H1 (cell line): ENCODE measurements at regions of chr11 and their contacts with region 1.

Region 1: GRCh38 chr11:77066229-77067042 is at the start of gene CAPN5:
- DNase-seq: peak; percentile 84 to 96
- H3K4me3 ChIP-seq: peak within 1 kb of the TSS; percentile 58 to 89 (median 66)
- H3K27ac ChIP-seq: peak within 1 kb of the TSS; percentile 50; the same call in 1 of the 2 replicates
- H3K4me1 ChIP-seq: peaks cover 0 to 7% (median under 1%) of the 10 kb centered on the region in 4 experiments; a peak in 5 of 7 replicates
- H3K27me3 ChIP-seq: peaks cover 0 to 3% (median 0%) of the 10 kb centered on the region in 4 experiments; a peak in 3 of 7 replicates
- CTCF ChIP-seq: peak; percentile 49 to 57 (median 51)
- EP300 ChIP-seq: peak in 1 of 2 experiments; percentile 27; a peak in 1 of 3 replicates
- POLR2A ChIP-seq: peak in 1 of 2 experiments; percentile 88; a peak in 2 of 3 replicates
- RAD21 ChIP-seq: peak; percentile 31 to 40; a peak in 2 of 4 replicates
- total RNA-seq, gene CAPN5: 22.4 and 22.6 TPM in 2 replicates

Region 2: GRCh38 chr11:77053217-77054015 is 13.0 kb before region 1 on chr11:
- CTCF ChIA-PET with region 1: interaction called, 43 read pairs
- POLR2A ChIA-PET with region 1: interaction called, 4 read pairs
- DNase-seq: no peak
- H3K4me3 ChIP-seq: no peak overlapping the region
- H3K27ac ChIP-seq: no peak overlapping the region
- H3K4me1 ChIP-seq: no peaks in the 10 kb centered on the region
- H3K27me3 ChIP-seq: no peaks in the 10 kb centered on the region
- CTCF ChIP-seq: no peak
- EP300 ChIP-seq: no peak
- POLR2A ChIP-seq: no peak
- RAD21 ChIP-seq: no peak

Region 3: DNA sequence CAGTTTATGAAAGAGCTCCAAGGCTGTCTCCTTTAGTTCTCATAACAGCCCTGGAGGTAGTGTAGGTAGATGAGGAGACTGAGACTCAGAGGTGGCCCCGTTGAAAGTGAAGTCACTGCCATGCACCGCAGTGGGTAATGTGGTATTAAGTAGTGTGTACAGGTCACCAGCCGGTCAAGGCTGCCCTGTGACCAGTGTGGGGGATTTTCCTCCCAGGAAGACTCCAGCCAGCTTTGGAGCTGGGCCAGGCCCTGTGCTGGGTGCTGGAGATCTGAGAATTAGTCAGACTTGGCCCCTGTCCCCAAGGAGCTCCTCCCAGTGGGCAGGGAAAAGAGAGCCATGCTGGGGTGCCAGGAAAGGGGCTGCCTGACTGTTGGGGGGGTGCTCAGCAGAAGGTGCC is 41.5 kb after region 1 on chr11:
- CTCF ChIA-PET with region 1: interaction called, 13 read pairs
- POLR2A ChIA-PET with region 1: no interaction called
- DNase-seq: no peak
- H3K4me3 ChIP-seq: no peak overlapping the region
- H3K27ac ChIP-seq: no peak overlapping the region
- H3K4me1 ChIP-seq: peaks cover 0 to under 1% (median 0%) of the 10 kb centered on the region in 4 experiments; a peak in 1 of 7 replicates
- H3K27me3 ChIP-seq: no peaks in the 10 kb centered on the region
- CTCF ChIP-seq: no peak
- EP300 ChIP-seq: no peak
- POLR2A ChIP-seq: no peak
- RAD21 ChIP-seq: no peak